Mammary epithelial cell (primary cell): ENCODE measurements at regions of chr5 and their contacts with region 1.

Region 1: GRCh38 chr5:3778000-3778550 is 182.4 kb downstream of the IRX1 start:
- DNase-seq: no peak
- H3K4me3 ChIP-seq: no peak overlapping the region
- H3K27ac ChIP-seq: no peak overlapping the region
- H3K4me1 ChIP-seq: no peaks in the 10 kb centered on the region
- H3K27me3 ChIP-seq: no peaks in the 10 kb centered on the region
- CTCF ChIP-seq: no peak

Region 2: GRCh38 chr5:3642231-3642630 is 135.8 kb before region 1 on chr5:
- CTCF ChIA-PET with region 1: no interaction called
- dilution Hi-C with region 1: loop called (anchors 10 kb)
- in situ Hi-C with region 1: no loop called
- intact Hi-C with region 1: no loop called
- DNase-seq: no peak
- H3K4me3 ChIP-seq: no peak overlapping the region
- H3K27ac ChIP-seq: no peak overlapping the region
- H3K4me1 ChIP-seq: no peaks in the 10 kb centered on the region
- H3K27me3 ChIP-seq: no peaks in the 10 kb centered on the region
- CTCF ChIP-seq: no peak

Region 3: GRCh38 chr5:3751846-3752245 is 26.2 kb before region 1 on chr5:
- CTCF ChIA-PET with region 1: no interaction called
- dilution Hi-C with region 1: no loop called
- in situ Hi-C with region 1: no loop called
- intact Hi-C with region 1: loop called (anchors 2 kb)
- DNase-seq: no peak
- H3K4me3 ChIP-seq: no peak overlapping the region
- H3K27ac ChIP-seq: no peak overlapping the region
- H3K4me1 ChIP-seq: no peaks in the 10 kb centered on the region
- H3K27me3 ChIP-seq: no peaks in the 10 kb centered on the region
- CTCF ChIP-seq: no peak